Dendritic cell treated with granulocyte-macrophage colony-stimulating factor and Interleukin-4, amounts not matched to agents 40 ng/mL and 50 ng/mL, for 4 days (primary cell): ENCODE measurements at regions of chr3 and their contacts with region 1.

Region 1: DNA sequence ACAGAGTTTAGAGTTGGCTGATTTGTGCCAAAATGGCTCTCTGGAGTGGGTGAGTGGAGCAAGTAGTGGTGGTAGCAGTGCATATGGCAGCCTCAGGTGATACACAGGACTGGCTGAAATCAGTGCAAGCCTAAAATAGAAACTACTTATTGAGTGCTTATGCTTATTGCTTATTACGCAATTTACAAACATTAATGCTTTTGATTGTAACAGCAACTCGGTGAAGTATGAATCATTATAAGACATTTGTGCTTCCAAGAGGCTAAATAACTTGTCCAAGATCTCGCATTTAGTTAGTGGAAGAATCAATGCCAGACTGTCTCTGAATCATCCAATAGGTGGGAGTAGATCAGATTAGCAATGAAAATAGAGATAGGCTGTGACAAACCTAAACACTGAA is 353.8 kb downstream of the NAALADL2 start:
- H3K4me3 Mint-ChIP-seq: no peak overlapping the region
- H3K27ac Mint-ChIP-seq: no peak overlapping the region
- H3K4me1 Mint-ChIP-seq: no peaks in the 10 kb centered on the region
- H3K27me3 Mint-ChIP-seq: no peaks in the 10 kb centered on the region

Region 2: DNA sequence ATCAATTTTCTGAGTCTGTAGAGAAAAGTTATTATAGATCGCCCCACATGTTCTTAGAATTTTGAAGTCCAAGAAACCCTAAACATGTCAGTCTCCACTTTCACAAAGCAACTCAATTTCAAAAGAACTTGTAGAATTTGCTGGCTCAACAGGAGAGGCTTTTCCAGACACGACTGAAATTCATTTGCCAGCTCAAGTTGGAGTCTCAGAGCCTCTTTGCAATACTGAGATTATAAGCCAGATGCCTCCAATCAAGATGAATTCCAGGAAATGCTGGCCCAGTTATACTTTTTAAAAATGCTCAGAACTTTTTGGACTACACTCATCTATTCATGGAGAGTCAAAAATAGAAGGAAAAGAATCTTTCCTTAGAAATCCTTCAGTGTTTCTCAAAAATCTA is 1872.3 kb before region 1 on chr3:
- intact Hi-C with region 1: loop called (anchors 10 kb)
- H3K4me3 Mint-ChIP-seq: no peak overlapping the region
- H3K27ac Mint-ChIP-seq: no peak overlapping the region
- H3K4me1 Mint-ChIP-seq: no peaks in the 10 kb centered on the region
- H3K27me3 Mint-ChIP-seq: no peaks in the 10 kb centered on the region

Region 3: GRCh38 chr3:175149675-175150074 is 63.2 kb before region 1 on chr3:
- intact Hi-C with region 1: no loop called
- H3K4me3 Mint-ChIP-seq: no peak overlapping the region
- H3K27ac Mint-ChIP-seq: no peak overlapping the region
- H3K4me1 Mint-ChIP-seq: no peaks in the 10 kb centered on the region
- H3K27me3 Mint-ChIP-seq: no peaks in the 10 kb centered on the region

Region 4: GRCh38 chr3:175178816-175179454 is 34.0 kb before region 1 on chr3:
- intact Hi-C with region 1: no loop called
- H3K4me3 Mint-ChIP-seq: no peak overlapping the region
- H3K27ac Mint-ChIP-seq: no peak overlapping the region
- H3K4me1 Mint-ChIP-seq: no peaks in the 10 kb centered on the region
- H3K27me3 Mint-ChIP-seq: no peaks in the 10 kb centered on the region